GM23248 (cell line): ENCODE measurements at regions of chr5 and their contacts with region 1.

Region 1: DNA sequence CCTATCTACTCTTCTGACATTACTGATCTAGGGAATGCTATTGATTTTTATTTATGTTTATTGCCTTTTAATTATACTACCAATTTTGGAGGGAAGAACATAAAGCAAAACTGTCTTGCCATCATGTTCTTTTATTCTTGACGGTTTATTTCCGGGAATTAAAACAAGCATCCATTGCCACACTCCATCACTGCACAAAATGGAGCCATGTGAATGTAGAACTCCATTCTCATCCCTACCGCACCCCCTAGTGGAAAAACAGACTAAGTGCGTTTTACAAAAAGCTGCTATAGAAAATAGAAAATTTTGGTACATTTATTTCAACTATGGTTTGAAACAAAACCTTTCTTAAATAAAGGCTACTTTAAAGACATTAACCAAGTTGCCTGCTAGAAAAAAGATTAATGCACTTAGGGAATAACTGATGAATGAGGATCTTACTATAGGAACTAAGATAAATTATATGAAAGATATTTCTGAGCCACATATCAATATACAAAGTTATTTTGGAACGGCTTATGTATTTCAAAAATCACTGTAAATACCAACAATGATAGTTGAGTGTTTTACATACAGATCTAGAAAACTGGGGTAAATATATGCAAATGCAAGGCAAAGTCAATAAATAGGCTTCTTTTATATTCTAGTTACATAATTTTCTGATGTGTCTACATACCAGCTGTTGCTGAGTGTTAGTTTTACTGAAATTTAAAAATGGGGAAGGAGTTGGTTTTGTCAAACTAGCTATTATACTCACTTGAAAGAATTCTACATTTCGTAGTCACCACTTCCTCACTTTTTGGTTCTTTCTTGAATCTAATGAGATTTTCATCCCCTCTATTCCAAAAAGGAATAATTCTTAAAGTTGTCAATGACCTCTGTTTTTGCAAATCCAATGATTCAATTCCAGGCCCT is 26.5 kb downstream of the OXCT1 start:
- DNase-seq: peak; percentile 82
- H3K4me3 ChIP-seq: no peak overlapping the region
- H3K27ac ChIP-seq: no peak overlapping the region
- H3K4me1 ChIP-seq: no peaks in the 10 kb centered on the region
- H3K27me3 ChIP-seq: no peaks in the 10 kb centered on the region

Region 2: GRCh38 chr5:41270423-41271251 is 573.1 kb before region 1 on chr5:
- in situ Hi-C with region 1: loop called (anchors 25 kb)
- DNase-seq: peak; percentile 80
- H3K4me3 ChIP-seq: no peak overlapping the region
- H3K27ac ChIP-seq: no peak overlapping the region
- H3K4me1 ChIP-seq: peaks cover 10% of the 10 kb centered on the region
- H3K27me3 ChIP-seq: no peaks in the 10 kb centered on the region

Region 3: DNA sequence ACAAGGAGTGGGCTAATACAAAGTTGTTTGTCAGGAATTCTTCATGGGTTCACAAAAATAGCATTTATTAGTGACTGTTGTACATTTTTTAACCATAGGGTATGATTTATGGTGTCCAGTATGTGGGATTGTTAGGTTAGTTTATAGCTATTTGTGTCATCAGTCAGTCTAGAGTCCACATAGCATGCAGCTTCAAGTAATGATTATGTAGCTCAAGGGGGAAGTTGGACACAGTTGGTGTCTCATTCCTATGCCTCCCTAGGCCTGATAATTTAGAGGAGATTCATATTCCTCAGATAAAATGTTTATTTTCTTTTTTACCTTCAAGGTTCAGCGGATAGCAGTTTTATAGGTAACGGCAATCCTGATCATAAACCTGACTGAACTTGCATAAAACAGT is 127.3 kb before region 1 on chr5:
- in situ Hi-C with region 1: loop called (anchors 10 kb)
- DNase-seq: no peak
- H3K4me3 ChIP-seq: no peak overlapping the region
- H3K27ac ChIP-seq: no peak overlapping the region
- H3K4me1 ChIP-seq: no peaks in the 10 kb centered on the region
- H3K27me3 ChIP-seq: no peaks in the 10 kb centered on the region